Endothelial cell of umbilical vein (primary cell): ENCODE measurements at regions of chr1 and their contacts with region 1.

Region 1: GRCh38 chr1:21764615-21765423 is 18.1 kb downstream of the USP48 start:
- DNase-seq: peak; percentile 98
- H3K4me3 ChIP-seq: no peak overlapping the region
- H3K27ac ChIP-seq: peak overlapping the region; percentile 85
- H3K4me1 ChIP-seq: peaks cover 32% of the 10 kb centered on the region
- H3K27me3 ChIP-seq: no peaks in the 10 kb centered on the region
- CTCF ChIP-seq: no peak
- POLR2A ChIP-seq: no peak

Region 2: GRCh38 chr1:21647431-21648351 is 117.1 kb before region 1 on chr1:
- CTCF ChIA-PET with region 1: no interaction called
- POLR2A ChIA-PET with region 1: no interaction called
- dilution Hi-C with region 1: no loop called
- intact Hi-C with region 1: no loop called
- DNase-seq: peak; percentile 53
- H3K4me3 ChIP-seq: no peak overlapping the region
- H3K27ac ChIP-seq: no peak overlapping the region
- H3K4me1 ChIP-seq: peaks cover 3% of the 10 kb centered on the region
- H3K27me3 ChIP-seq: peaks cover 12 to 16% of the 10 kb centered on the region in 2 experiments
- CTCF ChIP-seq: no peak
- POLR2A ChIP-seq: no peak

Region 3: GRCh38 chr1:21721295-21721985 is 43.4 kb before region 1 on chr1:
- CTCF ChIA-PET with region 1: interaction called, 3 read pairs
- POLR2A ChIA-PET with region 1: interaction called, 3 read pairs
- dilution Hi-C with region 1: no loop called
- intact Hi-C with region 1: loop called (anchors 5 kb)
- DNase-seq: peak; percentile 77
- H3K4me3 ChIP-seq: peak overlapping the region in 1 of 3 experiments; percentile 27
- H3K27ac ChIP-seq: peak overlapping the region; percentile 55
- H3K4me1 ChIP-seq: peaks cover 20% of the 10 kb centered on the region
- H3K27me3 ChIP-seq: no peaks in the 10 kb centered on the region
- CTCF ChIP-seq: no peak
- POLR2A ChIP-seq: no peak